Keratinocyte (primary cell): ENCODE measurements at regions of chrX and their contacts with region 1.

Region 1: DNA sequence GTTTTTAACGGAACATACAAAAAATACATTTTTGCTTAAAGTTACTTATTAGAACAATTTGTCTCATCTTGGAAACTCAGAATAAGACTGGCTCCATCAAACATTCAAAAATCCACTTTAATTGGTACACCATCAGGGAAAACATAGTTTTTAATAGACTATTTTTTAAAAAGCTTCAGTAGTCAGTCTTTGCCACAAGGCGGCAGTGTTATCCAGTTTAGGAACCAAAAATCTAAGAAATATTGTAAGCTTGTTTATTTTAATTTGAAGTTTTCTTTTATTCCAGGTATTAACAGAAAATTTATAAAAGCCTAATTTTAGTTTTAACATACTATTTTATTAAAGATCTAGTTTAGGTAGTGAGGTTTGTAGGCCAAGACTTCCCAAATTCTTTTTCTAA is 107.7 kb downstream of the APOOL start:
- DNase-seq: no peak
- H3K4me3 ChIP-seq: no peak overlapping the region
- H3K27ac ChIP-seq: no peak overlapping the region
- H3K4me1 ChIP-seq: peaks cover 2% of the 10 kb centered on the region
- H3K27me3 ChIP-seq: no peaks in the 10 kb centered on the region
- CTCF ChIP-seq: peak in 2 of 3 experiments; percentile 61 to 71

Region 2: DNA sequence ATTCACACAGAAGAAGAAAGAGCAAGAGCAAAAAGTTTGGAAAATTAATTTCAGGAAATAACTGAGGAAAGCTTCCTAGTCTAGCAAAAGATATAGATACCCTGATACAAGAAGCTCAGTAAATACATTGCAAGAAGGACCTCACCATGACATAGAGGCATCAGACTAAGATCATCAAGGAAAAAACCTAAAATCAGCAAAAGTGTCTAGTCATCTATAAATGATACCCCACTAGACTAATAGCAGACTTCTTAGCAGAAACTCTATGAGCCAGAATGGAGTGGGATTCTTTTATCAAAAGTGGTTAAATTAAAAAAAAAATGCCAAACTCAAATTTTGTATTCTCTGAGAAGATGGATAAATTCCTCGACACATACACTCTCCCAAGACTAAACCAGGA is 118.2 kb before region 1 on chrX:
- dilution Hi-C with region 1: no loop called
- DNase-seq: no peak
- H3K4me3 ChIP-seq: no peak overlapping the region
- H3K27ac ChIP-seq: no peak overlapping the region
- H3K4me1 ChIP-seq: no peaks in the 10 kb centered on the region
- H3K27me3 ChIP-seq: no peaks in the 10 kb centered on the region
- CTCF ChIP-seq: no peak

Region 3: DNA sequence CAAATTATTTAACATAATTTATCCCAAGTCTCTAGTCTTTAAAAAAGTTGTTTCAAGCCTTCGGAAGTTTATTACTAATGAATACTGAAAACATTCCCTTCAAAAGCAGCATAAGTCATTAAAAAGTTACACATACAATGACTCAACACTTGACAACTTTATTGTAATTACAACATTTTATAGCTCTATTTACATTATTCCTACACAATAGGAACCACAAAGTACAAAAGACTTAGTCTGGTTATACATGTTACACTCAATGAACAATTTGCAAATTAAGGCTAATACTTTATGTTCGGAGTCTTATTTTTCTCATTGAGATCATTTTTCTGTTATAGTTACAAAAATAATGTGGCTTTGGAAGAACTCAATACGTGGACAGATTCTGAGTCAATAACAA is 382.5 kb after region 1 on chrX:
- dilution Hi-C with region 1: no loop called
- DNase-seq: no peak
- H3K4me3 ChIP-seq: no peak overlapping the region
- H3K27ac ChIP-seq: no peak overlapping the region
- H3K4me1 ChIP-seq: peaks cover 2% of the 10 kb centered on the region
- H3K27me3 ChIP-seq: no peaks in the 10 kb centered on the region
- CTCF ChIP-seq: no peak

Region 4: GRCh38 chrX:85544609-85545008 is 433.3 kb after region 1 on chrX:
- dilution Hi-C with region 1: loop called (anchors 25 kb)
- DNase-seq: no peak
- H3K4me3 ChIP-seq: no peak overlapping the region
- H3K27ac ChIP-seq: no peak overlapping the region
- H3K4me1 ChIP-seq: no peaks in the 10 kb centered on the region
- H3K27me3 ChIP-seq: no peaks in the 10 kb centered on the region
- CTCF ChIP-seq: peak in 1 of 3 experiments; percentile 13